Right ventricle myocardium superior (tissue), 1 donor: ENCODE measurements at regions of chr12 and their contacts with region 1.

Region 1: GRCh38 chr12:96233939-96234461 is 39.8 kb downstream of the ELK3 start:
- DNase-seq: peak; percentile 96
- ATAC-seq: peak; percentile 87

Region 2: DNA sequence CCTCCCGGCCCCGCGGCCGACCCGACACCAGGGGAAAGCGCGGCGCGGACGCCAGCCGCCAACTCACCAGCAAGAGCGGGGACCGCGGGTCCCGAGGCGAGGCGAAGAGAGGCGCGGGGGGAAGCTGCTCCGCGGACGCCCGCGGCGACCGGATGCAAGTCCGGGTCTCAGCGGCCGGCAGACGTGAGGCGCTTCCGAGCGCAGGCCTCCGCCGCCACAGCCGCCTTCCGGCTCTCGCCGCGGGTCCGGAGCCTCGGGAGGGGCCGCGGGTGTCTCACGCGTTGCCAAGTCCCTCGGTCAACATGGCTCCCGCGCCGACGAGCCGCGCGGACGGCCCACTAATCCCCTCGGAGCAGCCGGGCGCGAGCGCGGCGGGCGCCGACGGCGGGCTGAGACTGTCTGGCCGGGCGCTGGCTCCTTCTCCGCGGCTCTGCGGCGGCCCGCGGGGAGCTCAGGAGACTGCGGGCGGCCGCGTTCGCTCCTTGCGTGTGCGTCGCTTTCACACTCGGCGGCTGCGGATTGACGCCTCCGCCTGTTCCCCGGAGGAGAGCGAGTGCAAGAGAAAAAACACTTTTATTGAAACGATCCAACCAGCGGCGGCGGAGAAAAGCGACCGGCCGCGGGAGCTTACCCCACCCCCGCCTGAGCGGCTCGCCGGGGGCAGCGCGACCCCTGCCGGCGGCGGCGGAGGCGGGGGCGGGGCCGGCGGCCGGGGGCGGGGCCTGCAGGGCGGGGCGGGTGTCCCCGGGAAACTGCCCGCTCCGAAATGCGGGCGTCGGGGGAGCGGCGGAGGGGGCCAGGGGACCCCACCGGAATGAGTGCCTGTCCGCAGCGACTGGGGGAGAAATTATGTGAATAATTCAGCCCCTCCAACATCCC is 166.2 kb after region 1 on chr12 and contains the start of gene CDK17:
- intact Hi-C with region 1: loop called (anchors 5 kb)
- DNase-seq: peak; percentile 90
- ATAC-seq: peak; percentile 91
- total RNA-seq, gene CDK17: 15.6 TPM